Caco-2 (cell line): ENCODE measurements at regions of chr5 and their contacts with region 1.

Region 1: GRCh38 chr5:150000256-150000989 is at the starts of genes HMGXB3 and TIGD6:
- DNase-seq: peak; percentile 95 to 97
- H3K4me3 ChIP-seq: peak within 1 kb of the TSS; percentile 72
- H3K4me3 Mint-ChIP-seq: peak within 1 kb of the TSS; percentile 85
- H3K27ac Mint-ChIP-seq: peak within 1 kb of the TSS; percentile 86
- H3K4me1 ChIP-seq: peaks cover 34% of the 10 kb centered on the region
- H3K4me1 Mint-ChIP-seq: peaks cover 42% of the 10 kb centered on the region
- H3K27me3 ChIP-seq: no peaks in the 10 kb centered on the region
- H3K27me3 Mint-ChIP-seq: no peaks in the 10 kb centered on the region
- CTCF ChIP-seq: no peak
- total RNA-seq, gene HMGXB3: 43.8 and 49.5 TPM in 2 replicates
- total RNA-seq, gene TIGD6: 3.0 and 4.3 TPM in 2 replicates

Region 2: GRCh38 chr5:149618581-149619251 is 381.7 kb before region 1 on chr5:
- CTCF ChIA-PET with region 1: no interaction called
- POLR2A ChIA-PET with region 1: no interaction called
- intact Hi-C with region 1: no loop called
- DNase-seq: peak; percentile 76 to 79
- H3K4me3 ChIP-seq: no peak overlapping the region
- H3K4me3 Mint-ChIP-seq: no peak overlapping the region
- H3K27ac Mint-ChIP-seq: peak overlapping the region; percentile 69
- H3K4me1 ChIP-seq: peaks cover 8% of the 10 kb centered on the region
- H3K4me1 Mint-ChIP-seq: peaks cover 7% of the 10 kb centered on the region
- H3K27me3 ChIP-seq: no peaks in the 10 kb centered on the region
- H3K27me3 Mint-ChIP-seq: no peaks in the 10 kb centered on the region
- CTCF ChIP-seq: peak; percentile 69 to 71

Region 3: GRCh38 chr5:149852641-149853330 is 147.6 kb before region 1 on chr5:
- CTCF ChIA-PET with region 1: interaction called, 10 read pairs
- POLR2A ChIA-PET with region 1: interaction called, 3 read pairs
- intact Hi-C with region 1: no loop called
- DNase-seq: peak; percentile 79 to 81
- H3K4me3 ChIP-seq: no peak overlapping the region
- H3K4me3 Mint-ChIP-seq: no peak overlapping the region
- H3K27ac Mint-ChIP-seq: no peak overlapping the region
- H3K4me1 ChIP-seq: no peaks in the 10 kb centered on the region
- H3K4me1 Mint-ChIP-seq: no peaks in the 10 kb centered on the region
- H3K27me3 ChIP-seq: no peaks in the 10 kb centered on the region
- H3K27me3 Mint-ChIP-seq: no peaks in the 10 kb centered on the region
- CTCF ChIP-seq: peak; percentile 83 to 86

Region 4: DNA sequence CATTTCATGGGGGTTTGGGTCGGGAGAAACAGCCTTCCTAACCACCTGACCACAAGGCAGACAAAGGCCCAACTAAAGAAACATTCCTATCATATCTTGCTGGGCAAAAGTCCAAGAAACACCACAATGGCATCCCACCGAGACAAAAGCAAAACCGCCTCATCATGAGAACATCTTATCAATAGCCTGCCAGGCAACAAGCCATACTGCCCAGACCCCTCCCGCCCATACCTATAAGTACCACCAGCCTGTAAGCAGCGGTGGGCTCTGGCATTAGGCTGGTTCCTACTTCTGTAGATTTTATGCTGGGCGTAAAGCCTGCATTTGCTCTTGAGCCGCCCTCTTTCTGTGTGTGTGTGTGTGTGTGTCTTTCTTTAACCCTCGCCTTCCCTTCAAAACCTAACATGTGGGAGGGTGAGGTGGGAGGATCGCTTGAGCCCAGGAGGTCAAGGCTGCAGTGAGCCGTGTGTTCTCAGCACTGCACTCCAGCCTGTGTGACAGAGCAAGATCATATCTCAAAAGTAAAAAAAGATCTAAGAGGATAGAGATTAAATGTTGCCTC is 112.7 kb before region 1 on chr5:
- CTCF ChIA-PET with region 1: no interaction called
- POLR2A ChIA-PET with region 1: no interaction called
- intact Hi-C with region 1: no loop called
- DNase-seq: peak; percentile 84 to 88
- H3K4me3 ChIP-seq: peak overlapping the region; percentile 5; the same call in 1 of the 2 replicates
- H3K4me3 Mint-ChIP-seq: peak overlapping the region; percentile 64
- H3K27ac Mint-ChIP-seq: peak overlapping the region; percentile 90
- H3K4me1 ChIP-seq: peaks cover 25% of the 10 kb centered on the region
- H3K4me1 Mint-ChIP-seq: peaks cover 21% of the 10 kb centered on the region
- H3K27me3 ChIP-seq: no peaks in the 10 kb centered on the region
- H3K27me3 Mint-ChIP-seq: no peaks in the 10 kb centered on the region
- CTCF ChIP-seq: no peak

Region 5: DNA sequence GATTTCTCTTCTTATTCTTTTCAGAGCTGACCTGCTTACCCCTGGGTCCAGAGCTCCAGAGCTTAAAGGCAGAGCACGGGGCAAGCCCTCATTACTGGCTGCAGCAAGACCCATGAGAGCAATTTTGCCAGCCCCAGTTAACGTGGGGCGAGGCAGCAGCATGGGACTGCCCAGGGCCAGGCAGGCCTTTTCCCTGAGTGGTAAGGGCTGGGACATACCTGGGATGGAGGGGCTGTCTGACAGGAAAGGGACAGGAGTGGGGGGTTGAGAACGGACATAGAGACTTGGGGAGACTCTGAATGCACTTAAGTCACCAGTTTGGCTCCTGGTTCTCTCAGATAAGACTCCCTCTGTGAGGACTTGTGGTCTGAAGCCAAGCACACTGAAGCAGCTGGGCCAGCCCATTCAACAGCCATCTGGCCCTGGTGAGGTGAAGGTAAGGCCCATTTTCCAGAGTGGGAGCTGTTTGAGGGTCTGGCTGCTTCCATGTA is 26.3 kb after region 1 on chr5:
- CTCF ChIA-PET with region 1: interaction called, 8 read pairs
- POLR2A ChIA-PET with region 1: interaction called, 7 read pairs
- intact Hi-C with region 1: loop called (anchors 1 kb)
- DNase-seq: no peak
- H3K4me3 ChIP-seq: no peak overlapping the region
- H3K4me3 Mint-ChIP-seq: no peak overlapping the region
- H3K27ac Mint-ChIP-seq: peak overlapping the region; percentile 21
- H3K4me1 ChIP-seq: peaks cover 19% of the 10 kb centered on the region
- H3K4me1 Mint-ChIP-seq: no peaks in the 10 kb centered on the region
- H3K27me3 ChIP-seq: no peaks in the 10 kb centered on the region
- H3K27me3 Mint-ChIP-seq: no peaks in the 10 kb centered on the region
- CTCF ChIP-seq: no peak